ENCODE measurements at regions of chr3 and their contacts with region 1.

Region 1: DNA sequence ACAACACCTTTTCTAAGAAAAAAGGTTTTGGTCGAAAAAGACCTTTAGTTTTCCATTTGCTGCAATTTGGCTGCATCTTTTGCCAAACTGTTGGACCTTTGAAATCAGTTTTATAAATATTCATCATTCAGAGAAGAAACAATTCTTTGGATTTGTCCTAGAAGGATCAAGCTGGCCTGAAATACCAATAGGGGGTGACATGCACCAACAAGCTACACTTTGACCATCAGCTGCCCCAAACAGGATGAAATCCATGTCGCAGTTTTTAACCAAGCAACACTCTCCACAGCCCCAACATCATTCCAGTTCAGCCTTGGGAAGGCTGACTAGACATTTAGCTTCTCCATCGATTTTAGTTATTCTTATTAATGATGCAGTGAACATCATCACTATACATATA is 9.8 kb downstream of the RPL15 start:
- DNase-seq: no peak
- ATAC-seq: peak; percentile 50; the same call in 2 of the 3 replicates
- H3K4me3 ChIP-seq: no peak overlapping the region
- H3K27ac ChIP-seq: no peak overlapping the region
- H3K4me1 ChIP-seq: peaks cover 3 to 15% of the 10 kb centered on the region in 2 experiments; a peak in 2 of 5 replicates
- H3K27me3 ChIP-seq: no peaks in the 10 kb centered on the region
- CTCF ChIP-seq: peak; percentile 36 to 64 (median 44); a peak in 5 of 6 replicates
- EP300 ChIP-seq: no peak
- POLR2A ChIP-seq: no peak
- RAD21 ChIP-seq: peak; percentile 22 to 59; a peak in 3 of 4 replicates

Region 2: GRCh38 chr3:23999012-23999641 is 72.4 kb after region 1 on chr3:
- CTCF ChIA-PET with region 1: no interaction called
- POLR2A ChIA-PET with region 1: no interaction called
- in situ Hi-C with region 1: no loop called
- intact Hi-C with region 1: loop called (anchors 2 kb)
- DNase-seq: peak; percentile 55 to 78 (median 58)
- ATAC-seq: peak; percentile 73
- H3K4me3 ChIP-seq: no peak overlapping the region
- H3K27ac ChIP-seq: no peak overlapping the region
- H3K4me1 ChIP-seq: no peaks in the 10 kb centered on the region
- H3K27me3 ChIP-seq: peaks cover 4 to 11% of the 10 kb centered on the region in 2 experiments; a peak in 3 of 5 replicates
- CTCF ChIP-seq: peak; percentile 90 to 98 (median 96)
- EP300 ChIP-seq: no peak
- POLR2A ChIP-seq: no peak
- RAD21 ChIP-seq: peak; percentile 99